WTC11 (cell line): ENCODE measurements at regions of chr14 and their contacts with region 1.

Region 1: GRCh38 chr14:22472935-22473854 is 115.8 kb downstream of the DAD1 start:
- DNase-seq: peak; percentile 48
- ATAC-seq: peak; percentile 63
- H3K4me3 Mint-ChIP-seq: no peak overlapping the region
- H3K27ac Mint-ChIP-seq: no peak overlapping the region
- H3K4me1 Mint-ChIP-seq: peaks cover 27% of the 10 kb centered on the region
- H3K27me3 Mint-ChIP-seq: no peaks in the 10 kb centered on the region
- CTCF ChIP-seq: peak; percentile 34; the same call in 1 of the 2 replicates

Region 2: GRCh38 chr14:22386924-22387775 is 86.0 kb before region 1 on chr14:
- CTCF ChIA-PET with region 1: interaction called, 37 read pairs
- POLR2A ChIA-PET with region 1: no interaction called
- DNase-seq: peak; percentile 72
- ATAC-seq: peak; percentile 58
- H3K4me3 Mint-ChIP-seq: no peak overlapping the region
- H3K27ac Mint-ChIP-seq: no peak overlapping the region
- H3K4me1 Mint-ChIP-seq: peaks cover 4% of the 10 kb centered on the region
- H3K27me3 Mint-ChIP-seq: no peaks in the 10 kb centered on the region; the same call in 1 of the 2 replicates
- CTCF ChIP-seq: peak; percentile 79

Region 3: GRCh38 chr14:22420598-22421186 is 52.5 kb before region 1 on chr14:
- CTCF ChIA-PET with region 1: no interaction called
- POLR2A ChIA-PET with region 1: no interaction called
- DNase-seq: no peak
- ATAC-seq: no peak
- H3K4me3 Mint-ChIP-seq: no peak overlapping the region
- H3K27ac Mint-ChIP-seq: no peak overlapping the region
- H3K4me1 Mint-ChIP-seq: peaks cover 17% of the 10 kb centered on the region
- H3K27me3 Mint-ChIP-seq: no peaks in the 10 kb centered on the region
- CTCF ChIP-seq: no peak

Region 4: DNA sequence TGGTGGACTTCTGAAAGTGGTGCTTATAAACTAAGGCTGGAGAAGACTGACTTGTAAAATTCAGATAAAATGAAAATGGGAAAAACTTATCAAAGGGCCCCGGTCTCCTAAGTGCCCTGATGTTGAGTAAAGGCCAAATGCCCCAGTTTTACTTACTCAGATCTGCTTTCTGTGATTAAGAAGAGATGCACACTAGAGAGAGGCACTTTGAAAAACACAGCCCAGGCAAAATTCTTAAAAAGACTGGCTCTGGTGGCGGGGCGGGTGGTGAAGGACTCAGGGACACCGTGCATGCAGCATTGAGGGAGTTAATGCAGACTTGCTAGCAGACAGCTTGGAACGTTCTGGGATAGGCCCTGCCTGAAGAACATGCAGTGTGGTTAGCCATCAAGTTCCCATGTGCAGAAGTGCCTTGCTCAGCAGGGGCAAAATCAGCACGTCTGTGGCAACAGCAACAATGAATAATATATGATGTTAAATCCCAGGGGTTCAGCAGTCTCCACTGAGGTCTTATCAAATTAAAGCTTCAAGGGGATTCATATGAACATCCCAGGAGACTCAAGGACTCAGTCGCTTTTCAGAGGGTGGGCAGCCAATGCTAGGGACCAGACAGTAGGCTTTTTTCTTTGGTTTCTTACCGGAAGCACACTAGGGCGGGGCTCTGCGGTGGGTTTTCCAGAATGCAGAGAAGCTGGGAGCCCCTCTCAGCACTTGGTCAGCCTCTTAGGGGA is 10.8 kb after region 1 on chr14:
- CTCF ChIA-PET with region 1: interaction called, 15 read pairs
- POLR2A ChIA-PET with region 1: no interaction called
- DNase-seq: no peak
- ATAC-seq: no peak
- H3K4me3 Mint-ChIP-seq: no peak overlapping the region
- H3K27ac Mint-ChIP-seq: no peak overlapping the region
- H3K4me1 Mint-ChIP-seq: peaks cover 44% of the 10 kb centered on the region
- H3K27me3 Mint-ChIP-seq: no peaks in the 10 kb centered on the region; the same call in 1 of the 2 replicates
- CTCF ChIP-seq: no peak

Region 5: DNA sequence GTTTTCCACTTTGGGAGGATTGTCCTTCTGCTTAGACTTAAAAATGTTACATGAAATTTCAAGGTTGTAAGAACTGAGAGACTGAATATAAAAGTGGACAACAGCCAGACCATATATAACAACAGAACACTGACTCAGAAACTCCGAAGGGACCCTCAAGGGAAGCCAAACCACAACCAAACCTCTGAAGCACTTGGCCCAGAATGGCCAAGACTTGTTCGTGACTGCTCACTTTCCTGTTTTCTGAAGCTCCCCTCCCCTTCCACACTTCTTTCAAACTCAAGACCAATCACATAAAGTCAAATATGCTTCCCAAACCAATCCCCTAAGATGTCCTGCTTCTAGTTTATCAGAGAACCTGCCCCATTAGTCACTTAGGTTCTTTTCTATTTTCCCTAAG is 157.3 kb after region 1 on chr14:
- CTCF ChIA-PET with region 1: no interaction called
- POLR2A ChIA-PET with region 1: no interaction called
- DNase-seq: no peak
- ATAC-seq: no peak
- H3K4me3 Mint-ChIP-seq: no peak overlapping the region
- H3K27ac Mint-ChIP-seq: no peak overlapping the region
- H3K4me1 Mint-ChIP-seq: peaks cover 14% of the 10 kb centered on the region
- H3K27me3 Mint-ChIP-seq: peaks cover 6% of the 10 kb centered on the region
- CTCF ChIP-seq: no peak